ENCODE measurements at regions of chr12 and their contacts with region 1.

Region 1: DNA sequence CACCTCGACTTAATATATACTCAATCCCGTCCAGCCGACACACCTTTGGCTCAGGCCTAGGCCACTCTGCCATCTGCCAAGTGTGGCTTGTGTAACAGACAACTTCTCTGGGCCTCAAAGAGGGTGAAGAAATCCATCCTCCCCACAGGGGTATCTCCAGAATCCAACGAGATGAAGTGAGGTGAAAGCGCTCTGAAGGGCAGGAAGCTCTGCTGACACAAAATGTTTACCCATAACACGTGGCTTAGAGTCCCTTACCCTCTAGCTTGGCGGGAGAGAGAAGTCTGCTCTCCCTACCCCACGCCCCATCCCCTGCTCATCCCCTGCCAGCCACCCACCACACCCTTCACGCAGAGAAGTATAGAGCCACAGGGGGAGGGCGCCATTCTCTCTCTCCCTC is 13.0 kb downstream of the ZBTB39 start:
- DNase-seq: no peak
- ATAC-seq: no peak
- H3K4me3 ChIP-seq: no peak overlapping the region
- H3K27ac ChIP-seq: no peak overlapping the region
- H3K4me1 ChIP-seq: 0 out of 3 replicates have a peak, but pooled peaks cover 6% of the 10 kb centered on the region
- CTCF ChIP-seq: no peak
- EP300 ChIP-seq: no peak
- POLR2A ChIP-seq: no peak
- RAD21 ChIP-seq: no peak

Region 2: DNA sequence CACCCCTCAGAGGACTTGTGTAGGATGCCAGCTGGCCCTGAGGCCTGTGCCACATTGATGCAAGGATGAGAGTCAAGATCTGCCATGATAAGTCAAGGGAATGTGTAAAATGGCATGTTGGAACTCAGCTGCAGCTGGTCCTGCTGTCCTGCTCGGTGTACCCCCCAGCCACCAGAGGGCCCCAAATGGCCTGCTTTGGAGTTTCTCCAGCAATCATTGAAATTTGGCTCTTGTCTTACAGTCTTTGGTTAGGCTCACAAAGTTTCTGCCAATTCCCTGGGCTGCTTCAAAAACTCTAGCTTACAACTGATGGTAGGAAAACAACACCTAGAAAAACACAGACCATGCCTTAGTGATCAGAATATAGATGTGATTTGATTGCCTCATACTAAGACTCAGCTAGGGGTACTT is 153.4 kb before region 1 on chr12:
- CTCF ChIA-PET with region 1: interaction called, 87 read pairs
- POLR2A ChIA-PET with region 1: no interaction called
- DNase-seq: peak; percentile 33 to 65
- ATAC-seq: peak; percentile 80 to 91; a peak in 5 of 6 replicates
- H3K4me3 ChIP-seq: no peak overlapping the region
- H3K27ac ChIP-seq: no peak overlapping the region; a peak in 1 of 6 replicates
- H3K4me1 ChIP-seq: peaks cover 21% of the 10 kb centered on the region; the same call in 2 of the 3 replicates
- CTCF ChIP-seq: peak; percentile 83
- EP300 ChIP-seq: no peak
- POLR2A ChIP-seq: no peak
- RAD21 ChIP-seq: peak; percentile 94 to 98

Region 3: GRCh38 chr12:57039016-57039798 is 45.9 kb after region 1 on chr12:
- CTCF ChIA-PET with region 1: no interaction called
- POLR2A ChIA-PET with region 1: no interaction called
- DNase-seq: no peak
- ATAC-seq: no peak
- H3K4me3 ChIP-seq: no peak overlapping the region
- H3K27ac ChIP-seq: no peak overlapping the region
- H3K4me1 ChIP-seq: no peaks in the 10 kb centered on the region
- CTCF ChIP-seq: no peak
- EP300 ChIP-seq: no peak
- POLR2A ChIP-seq: no peak
- RAD21 ChIP-seq: no peak

Region 4: GRCh38 chr12:57087010-57087690 is 93.8 kb after region 1 on chr12:
- CTCF ChIA-PET with region 1: no interaction called
- POLR2A ChIA-PET with region 1: no interaction called
- DNase-seq: peak; percentile 80 to 89
- ATAC-seq: peak; percentile 49 to 75
- H3K4me3 ChIP-seq: peak overlapping the region; percentile 89
- H3K27ac ChIP-seq: peak overlapping the region; percentile 96 to 100
- H3K4me1 ChIP-seq: peaks cover 19% of the 10 kb centered on the region
- CTCF ChIP-seq: no peak
- EP300 ChIP-seq: no peak
- POLR2A ChIP-seq: peak; percentile 23; the same call in 1 of the 2 replicates
- RAD21 ChIP-seq: no peak

Measured in A549 (cell line).